Activated B cell treated with CpG ODN at 0.5 μM for 24 hours (primary cell): ENCODE measurements at regions of chr5 and their contacts with region 1.

Region 1: GRCh38 chr5:73591102-73591695 is 25.7 kb downstream of the UTP15 start:
- DNase-seq: no peak
- ATAC-seq: no peak
- H3K4me3 Mint-ChIP-seq: no peak overlapping the region
- H3K27ac Mint-ChIP-seq: no peak overlapping the region
- H3K4me1 Mint-ChIP-seq: no peaks in the 10 kb centered on the region
- H3K27me3 Mint-ChIP-seq: no peaks in the 10 kb centered on the region
- CTCF ChIP-seq: peak; percentile 92

Region 2: DNA sequence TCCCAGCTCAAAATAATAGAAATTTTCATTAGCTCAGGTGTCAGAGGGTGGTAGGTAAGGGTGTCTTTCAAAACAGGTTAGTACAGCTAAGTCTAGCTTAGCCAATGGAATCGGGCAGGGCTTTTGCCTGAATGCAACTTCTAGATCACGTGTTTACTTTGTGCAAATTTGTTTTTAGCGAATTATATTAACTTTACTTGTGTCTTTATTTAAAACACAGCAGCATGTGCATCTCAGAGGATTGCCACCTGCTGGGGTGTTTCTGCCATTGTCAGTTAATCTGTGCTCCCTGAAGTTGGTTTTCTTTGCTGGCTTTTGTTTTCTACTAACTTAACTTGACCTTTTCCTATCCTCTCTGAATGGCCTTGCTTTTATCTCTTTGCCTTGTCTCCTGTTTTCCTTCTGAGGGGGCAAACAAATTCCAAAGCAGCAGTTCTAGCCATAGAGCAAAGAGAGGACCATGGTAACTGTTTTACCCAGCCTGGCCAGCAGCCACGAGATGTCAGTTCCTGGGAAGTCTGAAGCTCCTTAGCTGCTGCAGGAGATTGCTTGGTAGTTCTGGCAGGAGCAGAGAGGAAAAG is 102.4 kb after region 1 on chr5:
- CTCF ChIA-PET with region 1: no interaction called
- POLR2A ChIA-PET with region 1: no interaction called
- intact Hi-C with region 1: loop called (anchors 5 kb)
- DNase-seq: no peak
- ATAC-seq: no peak
- H3K4me3 Mint-ChIP-seq: no peak overlapping the region
- H3K27ac Mint-ChIP-seq: no peak overlapping the region
- H3K4me1 Mint-ChIP-seq: no peaks in the 10 kb centered on the region
- H3K27me3 Mint-ChIP-seq: peaks cover 6% of the 10 kb centered on the region
- CTCF ChIP-seq: no peak

Region 3: GRCh38 chr5:73792687-73793320 is 201.6 kb after region 1 on chr5:
- CTCF ChIA-PET with region 1: interaction called, 61 read pairs
- POLR2A ChIA-PET with region 1: no interaction called
- intact Hi-C with region 1: loop called (anchors 1 kb)
- DNase-seq: peak; percentile 24
- ATAC-seq: peak; percentile 64
- H3K4me3 Mint-ChIP-seq: no peak overlapping the region
- H3K27ac Mint-ChIP-seq: no peak overlapping the region
- H3K4me1 Mint-ChIP-seq: no peaks in the 10 kb centered on the region
- H3K27me3 Mint-ChIP-seq: peaks cover 18% of the 10 kb centered on the region
- CTCF ChIP-seq: peak; percentile 88